Panc1 (cell line): ENCODE measurements at regions of chr3 and their contacts with region 1.

Region 1: GRCh38 chr3:142828703-142829305 is 60.1 kb downstream of the PCOLCE2 start:
- DNase-seq: peak; percentile 73
- ATAC-seq: peak; percentile 99
- H3K4me3 ChIP-seq: no peak overlapping the region
- H3K27ac ChIP-seq: no peak overlapping the region
- H3K4me1 ChIP-seq: no peaks in the 10 kb centered on the region
- H3K27me3 ChIP-seq: no peaks in the 10 kb centered on the region
- CTCF ChIP-seq: peak; percentile 96

Region 2: DNA sequence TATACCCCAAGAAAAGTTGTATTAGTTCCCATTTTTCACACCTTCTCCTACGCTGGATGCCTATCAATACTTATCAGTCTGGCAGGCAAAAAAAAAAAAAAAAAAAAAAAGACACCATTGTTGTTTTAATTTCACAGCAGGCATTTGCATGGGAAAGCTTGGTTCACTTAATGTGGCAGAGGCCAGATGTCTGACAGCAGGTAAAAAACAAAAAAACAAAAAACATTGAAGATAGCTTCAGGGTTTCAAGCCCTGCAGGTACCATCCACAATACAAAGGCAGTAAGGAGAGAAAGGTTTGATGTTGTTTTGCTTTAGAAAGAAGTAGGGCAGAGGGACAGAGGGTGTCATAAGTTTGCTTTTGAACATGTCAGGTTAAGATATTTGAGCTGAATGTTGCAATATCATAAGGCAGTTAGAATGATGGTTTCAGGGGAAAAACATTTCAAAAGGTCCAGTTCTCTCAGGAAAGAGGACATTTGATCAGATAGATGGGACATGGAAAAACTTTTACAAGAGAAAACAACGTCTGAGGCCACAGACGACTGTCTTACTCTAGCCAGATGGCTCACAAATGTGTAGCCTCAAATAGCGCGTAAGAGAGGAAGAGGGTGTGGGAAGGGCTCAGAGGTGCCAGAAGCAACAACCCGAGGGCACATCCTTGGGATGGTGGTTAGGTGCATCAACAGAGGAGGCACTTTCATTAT is 34.4 kb after region 1 on chr3:
- CTCF ChIA-PET with region 1: interaction called, 10 read pairs
- POLR2A ChIA-PET with region 1: no interaction called
- in situ Hi-C with region 1: no loop called
- intact Hi-C with region 1: no loop called
- DNase-seq: no peak
- ATAC-seq: peak; percentile 82
- H3K4me3 ChIP-seq: no peak overlapping the region
- H3K27ac ChIP-seq: no peak overlapping the region
- H3K4me1 ChIP-seq: peaks cover 4% of the 10 kb centered on the region; the same call in 1 of the 2 replicates
- H3K27me3 ChIP-seq: no peaks in the 10 kb centered on the region
- CTCF ChIP-seq: no peak

Region 3: GRCh38 chr3:142875583-142876207 is 46.9 kb after region 1 on chr3:
- CTCF ChIA-PET with region 1: no interaction called
- POLR2A ChIA-PET with region 1: no interaction called
- in situ Hi-C with region 1: no loop called
- intact Hi-C with region 1: no loop called
- DNase-seq: no peak
- ATAC-seq: no peak
- H3K4me3 ChIP-seq: no peak overlapping the region
- H3K27ac ChIP-seq: no peak overlapping the region
- H3K4me1 ChIP-seq: no peaks in the 10 kb centered on the region
- H3K27me3 ChIP-seq: no peaks in the 10 kb centered on the region
- CTCF ChIP-seq: no peak

Region 4: DNA sequence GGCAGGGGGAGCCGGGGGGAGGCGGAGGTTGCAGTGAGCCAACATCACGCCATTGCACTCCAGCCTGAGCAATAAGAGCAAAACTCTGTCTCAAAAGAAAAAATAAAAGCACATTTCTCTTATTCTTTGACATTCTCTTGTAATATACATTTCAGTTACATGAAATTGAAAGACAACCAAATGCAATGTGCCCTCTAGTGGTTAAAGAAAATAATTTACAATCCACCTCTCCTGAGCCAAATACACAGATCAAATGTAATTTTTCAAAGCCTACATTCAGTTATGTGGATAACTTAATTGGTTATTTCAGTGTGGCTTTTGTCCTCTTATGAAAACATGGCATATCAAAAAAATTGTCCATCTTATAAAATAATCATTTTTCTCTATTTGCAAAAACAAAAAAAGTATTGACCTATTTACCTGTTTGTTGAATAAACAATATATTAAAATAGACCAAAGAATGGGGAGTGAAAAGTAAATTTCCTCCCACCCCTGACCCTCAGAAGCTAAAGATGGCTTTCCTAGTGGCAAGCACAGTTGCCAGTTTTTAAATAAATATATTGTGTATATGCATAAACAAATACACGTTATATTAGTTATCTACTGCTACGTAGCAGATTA is 158.4 kb after region 1 on chr3:
- CTCF ChIA-PET with region 1: interaction called, 9 read pairs
- POLR2A ChIA-PET with region 1: no interaction called
- in situ Hi-C with region 1: no loop called
- intact Hi-C with region 1: loop called (anchors 2 kb)
- DNase-seq: no peak
- ATAC-seq: peak; percentile 82
- H3K4me3 ChIP-seq: no peak overlapping the region
- H3K27ac ChIP-seq: no peak overlapping the region
- H3K4me1 ChIP-seq: no peaks in the 10 kb centered on the region
- H3K27me3 ChIP-seq: no peaks in the 10 kb centered on the region
- CTCF ChIP-seq: peak; percentile 82

Region 5: DNA sequence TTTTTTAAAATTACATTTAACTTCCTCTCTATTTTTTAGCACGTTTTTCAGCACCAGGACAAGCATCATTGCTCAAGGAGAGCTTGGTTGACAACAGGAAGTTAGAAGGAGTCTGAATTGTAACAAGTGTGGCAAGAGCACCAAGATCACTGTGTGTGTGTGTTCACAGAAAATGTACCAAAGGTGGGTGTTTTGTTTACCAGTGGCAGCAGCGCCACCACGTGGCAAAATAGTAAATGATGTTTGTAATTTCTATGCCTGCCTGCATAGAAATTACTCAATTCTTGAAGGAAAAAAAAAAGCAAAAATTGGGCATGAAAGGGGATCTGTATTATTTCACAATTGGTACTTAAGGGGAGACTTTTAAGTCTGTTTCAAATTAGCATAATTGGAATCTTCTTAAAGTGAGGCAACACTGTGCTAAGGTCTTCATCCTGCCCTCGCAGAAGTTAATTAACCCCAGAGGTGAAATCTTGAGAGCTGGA is 165.2 kb after region 1 on chr3:
- CTCF ChIA-PET with region 1: interaction called, 8 read pairs
- POLR2A ChIA-PET with region 1: interaction called, 3 read pairs
- in situ Hi-C with region 1: no loop called
- intact Hi-C with region 1: loop called (anchors 2 kb)
- DNase-seq: no peak
- ATAC-seq: peak; percentile 74; the same call in 1 of the 2 replicates
- H3K4me3 ChIP-seq: no peak overlapping the region
- H3K27ac ChIP-seq: no peak overlapping the region
- H3K4me1 ChIP-seq: peaks cover 25% of the 10 kb centered on the region
- H3K27me3 ChIP-seq: no peaks in the 10 kb centered on the region
- CTCF ChIP-seq: peak; percentile 89

Region 6: GRCh38 chr3:143081844-143082778 is 253.3 kb after region 1 on chr3:
- CTCF ChIA-PET with region 1: no interaction called
- POLR2A ChIA-PET with region 1: no interaction called
- in situ Hi-C with region 1: no loop called
- intact Hi-C with region 1: no loop called
- DNase-seq: no peak
- ATAC-seq: no peak
- H3K4me3 ChIP-seq: no peak overlapping the region
- H3K27ac ChIP-seq: no peak overlapping the region
- H3K4me1 ChIP-seq: no peaks in the 10 kb centered on the region
- H3K27me3 ChIP-seq: peaks cover 8% of the 10 kb centered on the region
- CTCF ChIP-seq: no peak